CD8-positive, alpha-beta T cell (primary cell): ENCODE measurements at regions of chr20 and their contacts with region 1.

Region 1: GRCh38 chr20:40962730-40963504 is 65.7 kb upstream of the TOP1 start:
- DNase-seq: peak; percentile 48 to 86 (median 74)
- ATAC-seq: peak; percentile 86
- H3K4me3 ChIP-seq: no peak overlapping the region
- H3K4me3 Mint-ChIP-seq: no peak overlapping the region
- H3K27ac ChIP-seq: no peak overlapping the region
- H3K27ac Mint-ChIP-seq: no peak overlapping the region
- H3K4me1 ChIP-seq: peaks cover 16% of the 10 kb centered on the region
- H3K4me1 Mint-ChIP-seq: peaks cover 8% of the 10 kb centered on the region
- H3K27me3 ChIP-seq: no peaks in the 10 kb centered on the region
- H3K27me3 Mint-ChIP-seq: no peaks in the 10 kb centered on the region
- CTCF ChIP-seq: peak; percentile 88

Region 2: DNA sequence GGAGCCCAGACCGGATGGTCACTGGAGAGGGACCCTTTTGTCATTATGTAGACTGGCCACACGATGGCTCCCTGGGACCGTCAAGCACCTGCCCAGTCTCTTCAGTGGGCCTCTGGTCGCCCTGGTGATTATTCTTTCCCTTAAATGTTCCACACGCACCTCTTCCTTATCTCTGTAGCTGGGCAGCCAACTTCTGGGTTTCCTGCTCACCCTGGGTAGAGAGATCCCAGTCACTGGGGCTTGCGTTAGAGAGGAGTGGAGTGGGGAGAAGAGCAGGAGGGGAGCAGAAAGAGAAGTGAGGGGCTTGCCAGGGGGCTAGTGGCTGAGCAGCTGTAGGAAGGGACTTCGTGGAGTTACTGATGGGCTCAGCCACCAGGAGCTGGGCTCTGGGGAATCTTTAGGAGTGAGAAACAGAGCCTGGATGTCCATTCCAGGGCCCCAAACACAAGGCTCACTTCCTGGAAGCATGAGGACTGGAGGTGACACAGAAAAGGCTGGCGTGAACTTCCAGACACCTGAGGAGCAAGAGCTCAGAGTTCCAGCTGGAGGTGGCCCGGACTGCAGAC is 1850.7 kb before region 1 on chr20:
- CTCF ChIA-PET with region 1: no interaction called
- POLR2A ChIA-PET with region 1: no interaction called
- intact Hi-C with region 1: loop called (anchors 2 to 5 kb)
- DNase-seq: peak in 1 of 9 experiments; percentile 9
- ATAC-seq: no peak
- H3K4me3 ChIP-seq: no peak overlapping the region
- H3K4me3 Mint-ChIP-seq: no peak overlapping the region
- H3K27ac ChIP-seq: no peak overlapping the region
- H3K27ac Mint-ChIP-seq: no peak overlapping the region
- H3K4me1 ChIP-seq: no peaks in the 10 kb centered on the region
- H3K4me1 Mint-ChIP-seq: no peaks in the 10 kb centered on the region
- H3K27me3 ChIP-seq: peaks cover 0 to 5% of the 10 kb centered on the region in 2 experiments
- H3K27me3 Mint-ChIP-seq: peaks cover 39% of the 10 kb centered on the region
- CTCF ChIP-seq: no peak

Region 3: GRCh38 chr20:39264506-39265172 is 1698.3 kb before region 1 on chr20:
- CTCF ChIA-PET with region 1: interaction called, 11 read pairs
- POLR2A ChIA-PET with region 1: no interaction called
- intact Hi-C with region 1: loop called in 1 of 2 experiments (anchors 2 kb)
- DNase-seq: peak in 7 of 9 experiments; percentile 5 to 51 (median 19)
- ATAC-seq: no peak
- H3K4me3 ChIP-seq: no peak overlapping the region
- H3K4me3 Mint-ChIP-seq: no peak overlapping the region
- H3K27ac ChIP-seq: no peak overlapping the region
- H3K27ac Mint-ChIP-seq: no peak overlapping the region
- H3K4me1 ChIP-seq: no peaks in the 10 kb centered on the region
- H3K4me1 Mint-ChIP-seq: no peaks in the 10 kb centered on the region
- H3K27me3 ChIP-seq: no peaks in the 10 kb centered on the region
- H3K27me3 Mint-ChIP-seq: peaks cover 9% of the 10 kb centered on the region
- CTCF ChIP-seq: peak; percentile 68

Region 4: GRCh38 chr20:39885975-39886649 is 1076.8 kb before region 1 on chr20:
- CTCF ChIA-PET with region 1: no interaction called
- POLR2A ChIA-PET with region 1: no interaction called
- intact Hi-C with region 1: loop called in 1 of 2 experiments (anchors 10 kb)
- DNase-seq: peak in 1 of 9 experiments; percentile 5
- ATAC-seq: no peak
- H3K4me3 ChIP-seq: no peak overlapping the region
- H3K4me3 Mint-ChIP-seq: no peak overlapping the region
- H3K27ac ChIP-seq: no peak overlapping the region
- H3K27ac Mint-ChIP-seq: no peak overlapping the region
- H3K4me1 ChIP-seq: no peaks in the 10 kb centered on the region
- H3K4me1 Mint-ChIP-seq: no peaks in the 10 kb centered on the region
- H3K27me3 ChIP-seq: no peaks in the 10 kb centered on the region
- H3K27me3 Mint-ChIP-seq: peaks cover 2% of the 10 kb centered on the region
- CTCF ChIP-seq: no peak

Region 5: GRCh38 chr20:40265825-40266533 is 696.9 kb before region 1 on chr20:
- CTCF ChIA-PET with region 1: no interaction called
- POLR2A ChIA-PET with region 1: no interaction called
- intact Hi-C with region 1: loop called in 1 of 2 experiments (anchors 10 kb)
- DNase-seq: no peak
- ATAC-seq: no peak
- H3K4me3 ChIP-seq: no peak overlapping the region
- H3K4me3 Mint-ChIP-seq: no peak overlapping the region
- H3K27ac ChIP-seq: no peak overlapping the region
- H3K27ac Mint-ChIP-seq: no peak overlapping the region
- H3K4me1 ChIP-seq: no peaks in the 10 kb centered on the region
- H3K4me1 Mint-ChIP-seq: no peaks in the 10 kb centered on the region
- H3K27me3 ChIP-seq: no peaks in the 10 kb centered on the region
- H3K27me3 Mint-ChIP-seq: no peaks in the 10 kb centered on the region
- CTCF ChIP-seq: no peak

Region 6: GRCh38 chr20:40457404-40457803 is 505.5 kb before region 1 on chr20:
- CTCF ChIA-PET with region 1: no interaction called
- POLR2A ChIA-PET with region 1: no interaction called
- intact Hi-C with region 1: no loop called
- DNase-seq: no peak
- ATAC-seq: no peak
- H3K4me3 ChIP-seq: no peak overlapping the region
- H3K4me3 Mint-ChIP-seq: no peak overlapping the region
- H3K27ac ChIP-seq: no peak overlapping the region
- H3K27ac Mint-ChIP-seq: no peak overlapping the region
- H3K4me1 ChIP-seq: no peaks in the 10 kb centered on the region
- H3K4me1 Mint-ChIP-seq: no peaks in the 10 kb centered on the region
- H3K27me3 ChIP-seq: no peaks in the 10 kb centered on the region
- H3K27me3 Mint-ChIP-seq: peaks cover 2% of the 10 kb centered on the region
- CTCF ChIP-seq: no peak

Region 7: GRCh38 chr20:40741507-40742106 is 221.3 kb before region 1 on chr20:
- CTCF ChIA-PET with region 1: interaction called, 21 read pairs
- POLR2A ChIA-PET with region 1: no interaction called
- intact Hi-C with region 1: loop called in 1 of 2 experiments (anchors 1 kb)
- DNase-seq: peak in 7 of 9 experiments; percentile 8 to 64 (median 27)
- ATAC-seq: no peak
- H3K4me3 ChIP-seq: no peak overlapping the region
- H3K4me3 Mint-ChIP-seq: no peak overlapping the region
- H3K27ac ChIP-seq: no peak overlapping the region
- H3K27ac Mint-ChIP-seq: no peak overlapping the region
- H3K4me1 ChIP-seq: no peaks in the 10 kb centered on the region
- H3K4me1 Mint-ChIP-seq: no peaks in the 10 kb centered on the region
- H3K27me3 ChIP-seq: no peaks in the 10 kb centered on the region
- H3K27me3 Mint-ChIP-seq: peaks cover 2% of the 10 kb centered on the region
- CTCF ChIP-seq: no peak

Region 8: GRCh38 chr20:40925829-40926510 is 36.9 kb before region 1 on chr20:
- CTCF ChIA-PET with region 1: no interaction called
- POLR2A ChIA-PET with region 1: no interaction called
- intact Hi-C with region 1: no loop called
- DNase-seq: no peak
- ATAC-seq: no peak
- H3K4me3 ChIP-seq: no peak overlapping the region
- H3K4me3 Mint-ChIP-seq: no peak overlapping the region
- H3K27ac ChIP-seq: no peak overlapping the region
- H3K27ac Mint-ChIP-seq: no peak overlapping the region
- H3K4me1 ChIP-seq: no peaks in the 10 kb centered on the region
- H3K4me1 Mint-ChIP-seq: no peaks in the 10 kb centered on the region
- H3K27me3 ChIP-seq: no peaks in the 10 kb centered on the region
- H3K27me3 Mint-ChIP-seq: peaks cover under 1% of the 10 kb centered on the region
- CTCF ChIP-seq: no peak

Region 9: DNA sequence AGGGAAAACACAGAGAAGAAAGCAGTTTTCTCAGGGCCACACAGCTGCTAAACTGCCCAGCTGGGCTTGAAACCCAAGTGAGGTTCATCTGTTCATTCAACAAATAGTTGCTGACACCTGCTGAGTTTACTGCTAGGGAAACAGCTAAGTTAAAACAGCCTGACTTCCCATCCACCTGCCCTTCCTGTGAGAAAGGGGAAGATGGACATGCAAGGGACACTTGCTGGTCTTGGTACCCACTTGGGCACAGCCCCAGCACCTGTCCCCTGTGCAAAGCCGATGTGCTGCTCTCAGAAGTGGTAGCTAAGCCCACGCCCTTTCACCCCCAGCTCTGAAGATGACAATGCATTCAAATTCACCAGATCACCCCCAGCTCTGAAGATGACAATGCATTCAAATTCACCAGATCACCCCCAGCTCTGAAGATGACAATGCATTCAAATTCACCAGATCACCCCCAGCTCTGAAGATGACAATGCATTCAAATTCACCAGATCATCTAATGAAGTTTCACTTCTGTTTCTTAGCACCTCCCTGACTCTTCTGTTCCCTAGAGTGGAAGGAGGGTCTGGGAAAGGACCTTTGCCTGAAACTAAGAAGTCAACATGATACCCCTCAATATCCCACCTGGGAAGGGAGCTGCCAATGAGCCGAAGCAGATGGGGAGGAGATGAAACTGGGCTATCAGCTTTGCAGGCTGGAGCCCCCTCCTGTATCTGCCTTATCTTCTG is 19.7 kb after region 1 on chr20:
- CTCF ChIA-PET with region 1: interaction called, 12 read pairs
- POLR2A ChIA-PET with region 1: no interaction called
- intact Hi-C with region 1: no loop called
- DNase-seq: no peak
- ATAC-seq: no peak
- H3K4me3 ChIP-seq: no peak overlapping the region
- H3K4me3 Mint-ChIP-seq: no peak overlapping the region
- H3K27ac ChIP-seq: no peak overlapping the region
- H3K27ac Mint-ChIP-seq: no peak overlapping the region
- H3K4me1 ChIP-seq: peaks cover 12% of the 10 kb centered on the region
- H3K4me1 Mint-ChIP-seq: peaks cover 12% of the 10 kb centered on the region
- H3K27me3 ChIP-seq: no peaks in the 10 kb centered on the region
- H3K27me3 Mint-ChIP-seq: peaks cover 5% of the 10 kb centered on the region
- CTCF ChIP-seq: no peak

Region 10: DNA sequence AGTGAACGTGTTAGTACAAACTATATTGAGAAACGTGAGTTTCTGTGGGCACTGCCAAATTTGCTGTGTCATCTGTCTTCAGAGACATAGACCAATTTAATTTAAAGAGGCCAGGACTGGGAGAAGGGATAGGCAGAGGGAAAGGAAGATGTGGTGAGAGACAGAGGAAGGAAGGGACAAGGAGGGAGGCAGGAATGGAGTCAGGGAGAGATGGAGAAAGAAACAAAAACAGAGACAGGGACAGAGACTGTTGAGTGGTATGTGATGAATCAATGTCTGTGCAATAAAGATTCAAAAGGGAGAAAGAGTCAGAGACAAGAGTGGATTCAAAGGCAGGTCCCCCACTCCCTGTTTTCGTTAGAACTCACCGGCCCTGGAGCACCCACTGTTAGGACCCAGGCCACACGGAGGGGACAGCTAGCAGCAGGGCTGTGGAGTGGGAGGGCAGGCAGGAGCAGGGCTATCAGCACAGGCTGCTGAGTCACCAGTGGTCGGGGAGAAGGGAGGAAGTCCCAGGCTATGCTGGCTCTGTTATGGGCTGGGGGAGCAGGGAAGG is 706.9 kb after region 1 on chr20:
- CTCF ChIA-PET with region 1: no interaction called
- POLR2A ChIA-PET with region 1: no interaction called
- intact Hi-C with region 1: no loop called
- DNase-seq: no peak
- ATAC-seq: no peak
- H3K4me3 ChIP-seq: no peak overlapping the region
- H3K4me3 Mint-ChIP-seq: no peak overlapping the region
- H3K27ac ChIP-seq: no peak overlapping the region
- H3K27ac Mint-ChIP-seq: no peak overlapping the region
- H3K4me1 ChIP-seq: no peaks in the 10 kb centered on the region
- H3K4me1 Mint-ChIP-seq: no peaks in the 10 kb centered on the region
- H3K27me3 ChIP-seq: peaks cover 0 to 4% of the 10 kb centered on the region in 2 experiments
- H3K27me3 Mint-ChIP-seq: peaks cover 43% of the 10 kb centered on the region
- CTCF ChIP-seq: no peak